GM12878 (cell line): ENCODE measurements at regions of chr2 and their contacts with region 1.

Region 1: GRCh38 chr2:61993444-61994024 is 88.1 kb downstream of the COMMD1 start:
- DNase-seq: peak; percentile 55
- ATAC-seq: peak; percentile 76
- H3K4me3 ChIP-seq: no peak overlapping the region
- H3K27ac ChIP-seq: no peak overlapping the region
- H3K4me1 ChIP-seq: peaks cover 26% of the 10 kb centered on the region
- H3K27me3 ChIP-seq: no peaks in the 10 kb centered on the region
- CTCF ChIP-seq: peak; percentile 74 to 87 (median 84)
- EP300 ChIP-seq: no peak
- POLR2A ChIP-seq: no peak
- RAD21 ChIP-seq: peak; percentile 91

Region 2: DNA sequence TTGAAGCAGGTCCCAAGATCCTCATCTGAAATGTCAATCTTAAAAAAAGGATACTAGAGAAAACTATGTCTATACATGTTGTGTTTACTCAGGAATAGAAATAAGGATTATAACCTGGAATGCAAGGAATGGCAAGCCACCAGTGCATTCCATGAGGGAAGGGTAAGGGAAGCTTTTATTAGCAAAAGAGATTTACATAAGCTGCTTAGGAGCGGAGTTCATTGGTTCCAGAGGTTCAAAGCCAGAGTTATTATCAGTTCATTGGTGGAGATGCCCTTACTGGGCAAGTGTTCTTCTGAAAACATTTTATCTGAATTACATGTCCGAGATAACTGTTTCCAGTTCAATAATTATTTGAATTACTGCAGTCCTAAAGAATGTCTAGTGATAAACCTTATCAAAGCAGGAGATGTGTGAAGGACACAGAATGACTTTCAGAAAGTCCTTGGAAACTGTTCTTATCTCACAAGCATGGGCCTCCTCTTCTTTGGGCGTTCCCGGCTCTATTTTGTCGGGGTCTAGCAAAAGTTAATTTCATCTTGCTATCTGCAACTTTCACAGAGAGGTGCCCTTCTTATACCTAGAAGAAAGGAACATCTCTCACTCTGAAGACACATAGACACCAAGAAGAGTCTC is 64.6 kb before region 1 on chr2:
- CTCF ChIA-PET with region 1: no interaction called
- POLR2A ChIA-PET with region 1: no interaction called
- RAD21 ChIA-PET with region 1: no interaction called
- SMC1A ChIA-PET with region 1: no interaction called
- in situ Hi-C with region 1: no loop called
- intact Hi-C with region 1: no loop called
- DNase-seq: no peak
- ATAC-seq: no peak
- H3K4me3 ChIP-seq: no peak overlapping the region
- H3K27ac ChIP-seq: no peak overlapping the region
- H3K4me1 ChIP-seq: no peaks in the 10 kb centered on the region
- H3K27me3 ChIP-seq: no peaks in the 10 kb centered on the region
- CTCF ChIP-seq: no peak
- EP300 ChIP-seq: no peak
- POLR2A ChIP-seq: no peak
- RAD21 ChIP-seq: no peak

Region 3: GRCh38 chr2:61978522-61978921 is 15.0 kb before region 1 on chr2:
- CTCF ChIA-PET with region 1: interaction called, 12 read pairs
- POLR2A ChIA-PET with region 1: no interaction called
- RAD21 ChIA-PET with region 1: interaction called, 9 read pairs
- SMC1A ChIA-PET with region 1: interaction called, 7 read pairs
- in situ Hi-C with region 1: no loop called
- intact Hi-C with region 1: no loop called
- DNase-seq: peak; percentile 45
- ATAC-seq: peak; percentile 80
- H3K4me3 ChIP-seq: no peak overlapping the region
- H3K27ac ChIP-seq: 0 out of 2 replicates have a peak overlapping the region, but pooled peaks have one; percentile 13
- H3K4me1 ChIP-seq: peaks cover 10% of the 10 kb centered on the region
- H3K27me3 ChIP-seq: no peaks in the 10 kb centered on the region
- CTCF ChIP-seq: no peak
- EP300 ChIP-seq: no peak
- POLR2A ChIP-seq: no peak
- RAD21 ChIP-seq: no peak

Region 4: GRCh38 chr2:62055724-62056336 is 62.3 kb after region 1 on chr2:
- CTCF ChIA-PET with region 1: interaction called, 8 read pairs
- POLR2A ChIA-PET with region 1: no interaction called
- RAD21 ChIA-PET with region 1: interaction called, 26 read pairs
- SMC1A ChIA-PET with region 1: interaction called, 6 read pairs
- in situ Hi-C with region 1: no loop called
- intact Hi-C with region 1: loop called (anchors 2 kb)
- DNase-seq: no peak
- ATAC-seq: peak; percentile 17; the same call in 2 of the 3 replicates
- H3K4me3 ChIP-seq: no peak overlapping the region
- H3K27ac ChIP-seq: no peak overlapping the region
- H3K4me1 ChIP-seq: peaks cover 18% of the 10 kb centered on the region
- H3K27me3 ChIP-seq: no peaks in the 10 kb centered on the region
- CTCF ChIP-seq: no peak
- EP300 ChIP-seq: no peak
- POLR2A ChIP-seq: no peak
- RAD21 ChIP-seq: no peak

Region 5: GRCh38 chr2:62140426-62141141 is 147.1 kb after region 1 on chr2:
- CTCF ChIA-PET with region 1: interaction called, 7 read pairs
- POLR2A ChIA-PET with region 1: interaction called, 3 read pairs
- RAD21 ChIA-PET with region 1: interaction called, 83 read pairs
- SMC1A ChIA-PET with region 1: interaction called, 47 read pairs
- in situ Hi-C with region 1: no loop called
- intact Hi-C with region 1: loop called (anchors 2 kb)
- DNase-seq: peak; percentile 85
- ATAC-seq: peak; percentile 68
- H3K4me3 ChIP-seq: no peak overlapping the region
- H3K27ac ChIP-seq: peak overlapping the region; percentile 90
- H3K4me1 ChIP-seq: peaks cover 62% of the 10 kb centered on the region
- H3K27me3 ChIP-seq: no peaks in the 10 kb centered on the region
- CTCF ChIP-seq: no peak
- EP300 ChIP-seq: peak in 1 of 2 experiments; percentile 45; a peak in 1 of 4 replicates
- POLR2A ChIP-seq: no peak
- RAD21 ChIP-seq: peak; percentile 29; the same call in 1 of the 2 replicates

Region 6: GRCh38 chr2:62216616-62217015 is 223.1 kb after region 1 on chr2:
- CTCF ChIA-PET with region 1: interaction called, 5 read pairs
- POLR2A ChIA-PET with region 1: no interaction called
- RAD21 ChIA-PET with region 1: interaction called, 5 read pairs
- SMC1A ChIA-PET with region 1: interaction called, 15 read pairs
- in situ Hi-C with region 1: no loop called
- intact Hi-C with region 1: no loop called
- DNase-seq: no peak
- ATAC-seq: no peak
- H3K4me3 ChIP-seq: no peak overlapping the region
- H3K27ac ChIP-seq: no peak overlapping the region
- H3K4me1 ChIP-seq: peaks cover 45% of the 10 kb centered on the region
- H3K27me3 ChIP-seq: no peaks in the 10 kb centered on the region
- CTCF ChIP-seq: no peak
- EP300 ChIP-seq: no peak
- POLR2A ChIP-seq: no peak
- RAD21 ChIP-seq: no peak

Region 7: GRCh38 chr2:62406573-62407043 is 413.1 kb after region 1 on chr2:
- CTCF ChIA-PET with region 1: interaction called, 195 read pairs
- POLR2A ChIA-PET with region 1: interaction called, 11 read pairs
- RAD21 ChIA-PET with region 1: interaction called, 141 read pairs
- SMC1A ChIA-PET with region 1: interaction called, 189 read pairs
- in situ Hi-C with region 1: loop called (anchors 5 kb)
- intact Hi-C with region 1: no loop called
- DNase-seq: peak; percentile 77
- ATAC-seq: peak; percentile 93
- H3K4me3 ChIP-seq: no peak overlapping the region
- H3K27ac ChIP-seq: peak overlapping the region; percentile 11
- H3K4me1 ChIP-seq: peaks cover 41% of the 10 kb centered on the region
- H3K27me3 ChIP-seq: no peaks in the 10 kb centered on the region
- CTCF ChIP-seq: no peak
- EP300 ChIP-seq: peak in 1 of 2 experiments; percentile 42; a peak in 1 of 4 replicates
- POLR2A ChIP-seq: no peak
- RAD21 ChIP-seq: no peak

Region 8: GRCh38 chr2:62871506-62871905 is 878.0 kb after region 1 on chr2:
- CTCF ChIA-PET with region 1: no interaction called
- POLR2A ChIA-PET with region 1: no interaction called
- RAD21 ChIA-PET with region 1: no interaction called
- SMC1A ChIA-PET with region 1: no interaction called
- in situ Hi-C with region 1: no loop called
- intact Hi-C with region 1: no loop called
- DNase-seq: no peak
- ATAC-seq: no peak
- H3K4me3 ChIP-seq: no peak overlapping the region
- H3K27ac ChIP-seq: no peak overlapping the region
- H3K4me1 ChIP-seq: no peaks in the 10 kb centered on the region
- H3K27me3 ChIP-seq: no peaks in the 10 kb centered on the region
- CTCF ChIP-seq: no peak
- EP300 ChIP-seq: no peak
- POLR2A ChIP-seq: no peak
- RAD21 ChIP-seq: no peak